Natural killer cell (primary cell): ENCODE measurements at regions of chrX and their contacts with region 1.

Region 1: GRCh38 chrX:153818571-153819383 is 11.6 kb downstream of the PDZD4 start:
- DNase-seq: peak; percentile 60 to 79
- ATAC-seq: peak; percentile 58 to 72 (median 70)
- H3K4me3 ChIP-seq: peak overlapping the region; percentile 15
- H3K4me3 Mint-ChIP-seq: peak overlapping the region; percentile 66
- H3K27ac ChIP-seq: peak overlapping the region; percentile 51
- H3K27ac Mint-ChIP-seq: peak overlapping the region; percentile 26 to 83
- H3K4me1 ChIP-seq: peaks cover 85% of the 10 kb centered on the region
- H3K4me1 Mint-ChIP-seq: peaks cover 56 to 60% of the 10 kb centered on the region in 2 donors
- H3K27me3 ChIP-seq: no peaks in the 10 kb centered on the region
- H3K27me3 Mint-ChIP-seq: peaks cover 0 to 7% of the 10 kb centered on the region in 2 donors
- CTCF ChIP-seq: no peak

Region 2: DNA sequence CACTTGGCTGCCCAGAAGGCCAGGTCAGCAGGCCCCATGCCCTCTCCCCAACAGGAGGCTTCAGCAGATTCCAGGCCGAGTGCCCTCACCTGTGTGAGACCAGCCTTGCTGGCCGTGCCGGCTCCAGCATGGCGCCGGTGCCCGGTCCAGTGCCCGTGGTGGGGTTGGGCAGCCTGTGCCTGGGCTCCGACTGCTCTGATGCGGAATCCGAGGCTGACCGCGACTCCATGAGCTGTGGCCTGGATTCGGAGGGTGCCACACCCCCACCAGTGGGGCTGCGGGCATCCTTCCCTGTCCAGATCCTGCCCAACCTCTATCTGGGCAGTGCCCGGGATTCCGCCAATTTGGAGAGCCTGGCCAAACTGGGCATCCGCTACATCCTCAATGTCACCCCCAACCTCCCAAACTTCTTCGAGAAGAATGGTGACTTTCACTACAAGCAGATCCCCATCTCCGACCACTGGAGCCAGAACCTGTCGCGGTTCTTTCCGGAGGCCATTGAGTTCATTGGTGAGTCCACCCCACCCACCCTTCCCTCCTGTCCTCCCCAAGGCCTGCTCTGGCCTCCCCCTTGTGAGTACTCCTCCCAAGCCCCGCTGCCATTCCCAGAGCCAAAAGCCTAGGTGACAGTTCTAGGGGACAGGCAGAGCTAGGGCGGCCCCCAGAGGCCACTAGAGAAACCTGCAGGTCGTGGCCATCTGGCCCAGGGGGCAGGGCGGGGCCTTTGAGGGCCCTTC is 169.4 kb before region 1 on chrX:
- intact Hi-C with region 1: no loop called
- DNase-seq: peak in 1 of 2 donors; percentile 62
- ATAC-seq: peak in 2 of 3 donors; percentile 46 to 50
- H3K4me3 ChIP-seq: no peak overlapping the region
- H3K4me3 Mint-ChIP-seq: no peak overlapping the region
- H3K27ac ChIP-seq: no peak overlapping the region
- H3K27ac Mint-ChIP-seq: no peak overlapping the region
- H3K4me1 ChIP-seq: peaks cover 10% of the 10 kb centered on the region
- H3K4me1 Mint-ChIP-seq: no peaks in the 10 kb centered on the region
- H3K27me3 ChIP-seq: peaks cover 6% of the 10 kb centered on the region
- H3K27me3 Mint-ChIP-seq: peaks cover 9 to 16% of the 10 kb centered on the region in 2 donors
- CTCF ChIP-seq: no peak

Region 3: GRCh38 chrX:153909024-153909970 is 90.5 kb after region 1 on chrX:
- intact Hi-C with region 1: loop called (anchors 5 kb)
- DNase-seq: no peak
- ATAC-seq: no peak
- H3K4me3 ChIP-seq: no peak overlapping the region
- H3K4me3 Mint-ChIP-seq: no peak overlapping the region
- H3K27ac ChIP-seq: no peak overlapping the region
- H3K27ac Mint-ChIP-seq: no peak overlapping the region
- H3K4me1 ChIP-seq: peaks cover 32% of the 10 kb centered on the region
- H3K4me1 Mint-ChIP-seq: peaks cover 15 to 29% of the 10 kb centered on the region in 2 donors
- H3K27me3 ChIP-seq: no peaks in the 10 kb centered on the region
- H3K27me3 Mint-ChIP-seq: no peaks in the 10 kb centered on the region
- CTCF ChIP-seq: no peak